Activated CD4-positive, alpha-beta T cell treated with anti-CD3 and anti-CD28 coated beads, Interleukin-2, amount 10 ng/mL, durations not matched to agents 7 days and 5 days (primary cell): ENCODE measurements at regions of chr15 and their contacts with region 1.

Region 1: GRCh38 chr15:89442671-89443307 is 53.6 kb downstream of the RHCG start:
- DNase-seq: peak; percentile 61
- H3K4me3 Mint-ChIP-seq: no peak overlapping the region
- H3K27ac Mint-ChIP-seq: no peak overlapping the region
- H3K4me1 Mint-ChIP-seq: no peaks in the 10 kb centered on the region
- H3K27me3 Mint-ChIP-seq: peaks cover 12% of the 10 kb centered on the region

Region 2: GRCh38 chr15:89472785-89473256 is 30.0 kb after region 1 on chr15:
- CTCF ChIA-PET with region 1: interaction called, 12 read pairs
- POLR2A ChIA-PET with region 1: no interaction called
- DNase-seq: peak; percentile 46
- H3K4me3 Mint-ChIP-seq: no peak overlapping the region
- H3K27ac Mint-ChIP-seq: no peak overlapping the region
- H3K4me1 Mint-ChIP-seq: no peaks in the 10 kb centered on the region
- H3K27me3 Mint-ChIP-seq: peaks cover 23% of the 10 kb centered on the region